ENCODE measurements at regions of chr3 and their contacts with region 1.

Region 1: GRCh38 chr3:119891944-119892721 is 110.2 kb downstream of the NR1I2 start:
- DNase-seq: peak; percentile 75
- H3K4me3 Mint-ChIP-seq: no peak overlapping the region
- H3K27ac Mint-ChIP-seq: no peak overlapping the region
- H3K4me1 Mint-ChIP-seq: peaks cover 8% of the 10 kb centered on the region
- H3K27me3 Mint-ChIP-seq: no peaks in the 10 kb centered on the region
- CTCF ChIP-seq: peak; percentile 53

Region 2: GRCh38 chr3:119880966-119881365 is 11.2 kb before region 1 on chr3:
- CTCF ChIA-PET with region 1: interaction called, 18 read pairs
- POLR2A ChIA-PET with region 1: no interaction called
- intact Hi-C with region 1: no loop called
- DNase-seq: no peak
- H3K4me3 Mint-ChIP-seq: no peak overlapping the region
- H3K27ac Mint-ChIP-seq: no peak overlapping the region
- H3K4me1 Mint-ChIP-seq: peaks cover 8% of the 10 kb centered on the region
- H3K27me3 Mint-ChIP-seq: no peaks in the 10 kb centered on the region
- CTCF ChIP-seq: no peak

Region 3: DNA sequence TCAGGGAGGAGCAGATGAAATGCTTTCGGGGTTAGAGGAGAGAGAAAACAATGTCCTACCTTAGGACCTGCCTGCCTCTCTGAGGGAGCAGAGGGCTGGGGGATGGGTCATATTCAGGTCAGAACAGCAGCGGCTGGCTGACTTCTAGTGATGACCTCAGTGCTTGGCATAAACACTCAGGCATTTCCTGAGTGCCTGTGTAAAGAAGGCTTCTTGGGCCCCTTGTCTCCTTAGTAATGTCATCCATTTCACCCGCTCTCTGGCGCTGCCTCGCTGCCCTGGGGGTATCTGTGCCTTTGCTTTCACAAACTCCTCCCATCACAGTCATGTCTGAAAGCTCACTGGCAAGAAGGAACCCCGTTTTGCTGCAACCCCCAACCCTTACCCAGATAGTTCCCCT is 285.0 kb after region 1 on chr3:
- CTCF ChIA-PET with region 1: interaction called, 78 read pairs
- POLR2A ChIA-PET with region 1: interaction called, 4 read pairs
- intact Hi-C with region 1: no loop called
- DNase-seq: peak; percentile 93
- H3K4me3 Mint-ChIP-seq: peak overlapping the region; percentile 65
- H3K27ac Mint-ChIP-seq: peak overlapping the region; percentile 96
- H3K4me1 Mint-ChIP-seq: peaks cover 34% of the 10 kb centered on the region
- H3K27me3 Mint-ChIP-seq: no peaks in the 10 kb centered on the region
- CTCF ChIP-seq: no peak

Region 4: DNA sequence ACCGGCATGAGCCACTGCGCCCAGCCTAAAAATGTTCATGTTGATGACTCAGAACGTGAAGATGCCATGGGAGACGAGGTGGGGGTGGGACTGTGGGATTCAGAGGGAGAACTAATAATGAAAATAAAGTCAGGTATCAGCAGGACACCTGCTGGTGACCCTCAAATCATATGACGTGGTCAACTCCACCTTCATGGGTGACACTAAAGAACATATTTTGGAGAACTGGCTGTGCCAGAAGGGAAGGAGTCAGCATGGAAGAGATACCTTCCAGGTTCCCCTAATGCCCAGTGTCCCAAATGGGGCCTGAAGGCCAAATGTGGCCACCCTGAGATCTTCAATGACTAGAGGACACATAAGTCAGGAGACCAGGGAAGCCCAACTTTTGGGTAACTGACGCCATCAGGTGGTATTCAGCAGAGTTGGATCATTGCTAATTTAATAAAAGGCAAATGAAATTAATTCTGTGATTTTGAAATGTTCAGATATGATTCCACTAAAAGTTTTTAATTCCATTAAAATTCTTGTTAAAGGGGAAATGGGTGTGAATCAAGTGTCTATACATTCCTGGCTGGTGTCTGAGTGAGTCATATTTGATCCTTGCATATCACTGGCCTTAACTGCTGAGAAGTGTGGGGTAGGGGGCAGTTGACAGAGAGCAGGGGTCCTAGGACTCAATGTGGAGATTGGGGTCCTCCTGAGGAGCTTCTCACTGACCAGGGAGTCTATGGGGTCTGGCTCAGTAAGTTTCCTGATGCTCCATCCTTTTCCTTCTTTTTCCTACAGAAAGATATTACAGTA is 290.8 kb after region 1 on chr3:
- CTCF ChIA-PET with region 1: interaction called, 78 read pairs
- POLR2A ChIA-PET with region 1: no interaction called
- intact Hi-C with region 1: loop called (anchors 1 kb)
- DNase-seq: peak; percentile 80
- H3K4me3 Mint-ChIP-seq: no peak overlapping the region
- H3K27ac Mint-ChIP-seq: peak overlapping the region; percentile 83
- H3K4me1 Mint-ChIP-seq: peaks cover 27% of the 10 kb centered on the region
- H3K27me3 Mint-ChIP-seq: no peaks in the 10 kb centered on the region
- CTCF ChIP-seq: peak; percentile 42

Region 5: DNA sequence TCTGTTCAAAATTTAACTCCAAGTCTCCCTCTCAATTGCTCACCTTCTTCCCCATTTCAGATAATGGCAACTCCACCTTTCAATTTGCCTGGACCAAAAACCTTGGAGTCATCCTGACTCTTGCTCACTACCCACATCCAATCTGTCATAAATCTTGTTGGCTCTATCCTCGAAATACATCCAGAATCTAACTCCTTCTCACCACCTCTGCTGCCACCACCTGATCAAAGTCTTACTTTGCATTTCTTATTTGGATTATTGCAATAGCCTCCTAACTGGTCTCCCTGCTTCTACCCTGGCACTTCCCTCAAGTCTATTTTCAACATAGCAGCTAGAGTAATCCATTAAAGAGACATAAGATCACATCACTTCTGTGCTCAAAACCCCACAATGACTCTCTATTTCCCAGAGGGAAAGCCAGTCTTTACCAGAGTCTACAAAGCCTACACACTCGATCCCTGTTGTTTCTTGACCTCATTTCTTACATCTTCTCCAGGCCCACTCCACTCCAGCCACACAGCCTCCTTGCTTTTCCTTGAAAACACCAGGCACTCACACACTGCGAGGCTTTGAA is 306.3 kb after region 1 on chr3:
- CTCF ChIA-PET with region 1: interaction called, 19 read pairs
- POLR2A ChIA-PET with region 1: interaction called, 3 read pairs
- intact Hi-C with region 1: loop called (anchors 1 kb)
- DNase-seq: peak; percentile 55
- H3K4me3 Mint-ChIP-seq: no peak overlapping the region
- H3K27ac Mint-ChIP-seq: no peak overlapping the region
- H3K4me1 Mint-ChIP-seq: peaks cover 6% of the 10 kb centered on the region
- H3K27me3 Mint-ChIP-seq: no peaks in the 10 kb centered on the region
- CTCF ChIP-seq: peak; percentile 41

Region 6: DNA sequence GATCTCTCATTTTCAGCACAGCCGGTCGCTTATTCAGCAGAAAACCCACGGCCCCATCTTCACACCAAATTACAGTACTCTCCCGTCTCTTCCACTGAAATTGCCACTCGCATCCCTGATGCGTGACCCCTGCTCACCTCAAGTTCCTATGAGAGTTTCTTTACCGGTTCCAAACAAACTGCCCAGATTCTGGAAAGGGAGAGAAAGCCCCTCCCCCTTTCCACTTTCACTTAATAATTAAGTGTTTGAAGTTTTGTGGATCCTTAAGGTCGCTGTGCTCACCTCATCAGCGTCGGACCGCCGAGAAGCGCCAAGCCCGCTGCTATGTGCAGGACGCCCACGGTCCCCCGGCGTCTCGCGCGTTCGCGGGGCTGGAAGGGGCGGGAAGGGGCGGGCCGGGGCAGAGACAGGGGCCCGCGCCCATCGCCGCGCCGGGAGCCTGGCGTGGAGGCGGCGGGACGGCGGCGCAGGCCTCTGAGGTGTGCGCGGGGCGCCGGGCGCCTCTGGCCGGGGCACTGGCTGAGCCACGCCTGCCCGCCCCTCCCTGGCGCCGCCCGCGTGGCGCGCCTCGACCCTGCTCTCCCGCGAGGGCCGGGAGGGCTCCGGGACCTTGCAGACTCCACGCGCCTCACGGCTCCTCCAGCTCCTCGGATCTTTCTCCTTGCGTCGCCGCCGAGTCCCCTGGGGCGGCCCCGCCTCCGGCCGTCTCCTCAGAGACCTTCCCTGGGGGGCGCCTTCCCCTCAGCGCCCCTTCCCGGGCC is 392.8 kb after region 1 on chr3 and contains the start of gene GPR156:
- CTCF ChIA-PET with region 1: no interaction called
- POLR2A ChIA-PET with region 1: no interaction called
- intact Hi-C with region 1: no loop called
- DNase-seq: peak; percentile 20
- H3K4me3 Mint-ChIP-seq: peak within 1 kb of the TSS; percentile 62
- H3K27ac Mint-ChIP-seq: no peak within 1 kb of the TSS
- H3K4me1 Mint-ChIP-seq: no peaks in the 10 kb centered on the region
- H3K27me3 Mint-ChIP-seq: no peaks in the 10 kb centered on the region
- CTCF ChIP-seq: no peak
- total RNA-seq, gene GPR156: 0.72 and 1.0 TPM in 2 replicates